ENCODE measurements at regions of chr10 and their contacts with region 1.

Region 1: GRCh38 chr10:86376852-86377796 is 10.5 kb upstream of the GRID1 start:
- DNase-seq: peak; percentile 78

Region 2: GRCh38 chr10:86100581-86101061 is 276.5 kb before region 1 on chr10:
- in situ Hi-C with region 1: loop called (anchors 10 kb)
- DNase-seq: peak; percentile 53

Region 3: DNA sequence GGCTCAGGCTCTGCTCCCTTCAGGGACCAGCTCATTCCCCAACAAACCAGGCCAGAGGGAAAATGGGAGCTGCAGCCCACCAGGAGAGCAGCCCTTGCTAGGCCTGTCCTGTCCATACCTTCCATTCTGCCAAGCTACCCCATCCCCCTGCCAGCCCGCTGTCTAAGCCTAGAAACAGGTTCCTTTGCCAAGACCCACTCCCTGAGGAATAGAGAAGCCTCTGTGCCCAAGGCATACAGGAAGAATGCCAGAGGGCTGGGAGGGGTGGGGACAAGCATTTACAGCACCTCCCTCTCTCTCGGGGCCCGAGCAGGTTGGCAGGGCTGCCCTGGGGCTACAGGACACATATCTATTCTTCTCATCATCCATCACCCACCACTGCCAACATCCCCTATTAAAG is 188.8 kb before region 1 on chr10:
- in situ Hi-C with region 1: no loop called
- DNase-seq: no peak

Region 4: GRCh38 chr10:87585565-87586514 is 1208.7 kb after region 1 on chr10:
- in situ Hi-C with region 1: no loop called
- DNase-seq: no peak

Measured in KBM-7 (cell line).